ENCODE measurements at regions of chr7 and their contacts with region 1.

Region 1: GRCh38 chr7:7424151-7424873 is 111.4 kb downstream of the COL28A1 start:
- DNase-seq: no peak
- ATAC-seq: peak; percentile 74

Region 2: DNA sequence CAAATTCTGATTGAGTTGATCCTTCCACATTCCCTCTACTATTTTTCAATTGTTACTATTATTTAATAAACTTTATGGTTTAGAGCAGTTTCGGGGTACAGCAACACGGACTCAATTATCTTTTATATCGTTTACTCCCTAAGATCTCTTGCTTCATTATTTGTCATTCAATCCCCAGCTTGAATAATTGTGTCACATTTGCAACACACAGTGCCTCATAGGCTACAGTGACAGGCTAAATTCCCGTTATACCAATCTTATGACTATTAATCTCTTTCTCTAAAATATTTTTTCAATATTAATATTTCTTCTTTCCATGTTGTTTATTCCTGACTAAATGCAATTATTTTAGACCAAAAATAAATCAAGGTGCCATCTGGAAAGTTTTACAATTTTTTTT is 115.4 kb after region 1 on chr7:
- intact Hi-C with region 1: loop called (anchors 2 kb)
- DNase-seq: no peak
- ATAC-seq: no peak

Measured in Right ventricle myocardium inferior (tissue), 1 donor.